Posterior vena cava (tissue), 2 donors: ENCODE measurements at regions of chr2 and their contacts with region 1.

Region 1: GRCh38 chr2:222813177-222813843 is 47.5 kb upstream of the ACSL3 start:
- DNase-seq: no peak

Region 2: DNA sequence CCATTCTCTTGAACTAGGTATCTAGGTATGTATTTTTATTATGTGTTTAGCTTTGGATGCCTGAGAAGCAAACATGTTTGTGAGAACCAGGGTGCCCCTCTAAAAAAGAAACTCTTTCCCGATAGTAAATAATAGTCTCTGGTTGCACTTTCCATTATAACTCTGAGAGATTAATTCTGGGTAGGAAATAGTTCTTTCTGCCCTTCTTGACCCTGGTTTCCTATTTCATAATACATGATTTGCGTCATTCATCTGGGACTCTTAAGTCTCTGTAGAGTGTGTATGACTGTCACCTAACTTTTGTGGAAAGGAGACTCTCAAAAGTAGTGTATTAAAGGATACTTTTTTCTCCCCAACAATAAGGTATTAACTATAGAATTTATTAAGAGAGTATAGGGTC is 79.0 kb after region 1 on chr2:
- intact Hi-C with region 1: no loop called
- DNase-seq: no peak

Region 3: GRCh38 chr2:223723954-223724411 is 910.7 kb after region 1 on chr2:
- intact Hi-C with region 1: loop called in 1 of 2 experiments (anchors 5 kb)
- DNase-seq: no peak

Region 4: DNA sequence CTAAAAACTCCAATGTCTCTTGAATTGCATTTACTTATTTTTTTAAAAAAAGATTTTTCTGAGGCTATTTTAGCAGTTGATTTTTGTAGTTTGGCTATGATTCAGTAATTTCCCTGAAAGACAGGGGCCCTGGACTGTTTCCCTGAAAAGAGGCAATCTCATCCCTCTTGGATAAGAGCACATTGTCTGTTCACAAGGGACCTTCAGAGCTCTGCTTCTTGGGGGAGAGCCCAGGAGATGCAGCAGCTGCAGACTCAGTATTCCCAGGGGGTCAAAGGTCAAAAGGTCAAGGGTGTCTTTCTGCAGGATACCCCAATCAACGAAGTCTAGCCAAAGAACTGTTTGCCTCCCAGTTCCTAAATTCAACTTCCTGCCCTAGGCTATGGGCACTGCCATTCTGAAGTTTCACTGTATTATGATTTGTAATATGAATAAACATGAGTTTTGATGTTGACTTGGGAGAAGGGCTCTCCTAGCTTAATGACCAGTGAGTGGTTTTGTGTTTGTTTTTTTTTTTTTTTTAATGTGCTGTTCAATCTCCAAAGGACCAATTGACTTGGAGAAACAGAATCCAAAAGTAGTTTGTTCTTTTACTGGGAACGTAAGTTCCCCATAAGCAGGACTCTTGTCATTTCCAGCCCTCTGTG is 1382.7 kb after region 1 on chr2:
- intact Hi-C with region 1: loop called in 1 of 2 experiments (anchors 10 kb)
- DNase-seq: no peak